ENCODE measurements at regions of chr12 and their contacts with region 1.

Region 1: DNA sequence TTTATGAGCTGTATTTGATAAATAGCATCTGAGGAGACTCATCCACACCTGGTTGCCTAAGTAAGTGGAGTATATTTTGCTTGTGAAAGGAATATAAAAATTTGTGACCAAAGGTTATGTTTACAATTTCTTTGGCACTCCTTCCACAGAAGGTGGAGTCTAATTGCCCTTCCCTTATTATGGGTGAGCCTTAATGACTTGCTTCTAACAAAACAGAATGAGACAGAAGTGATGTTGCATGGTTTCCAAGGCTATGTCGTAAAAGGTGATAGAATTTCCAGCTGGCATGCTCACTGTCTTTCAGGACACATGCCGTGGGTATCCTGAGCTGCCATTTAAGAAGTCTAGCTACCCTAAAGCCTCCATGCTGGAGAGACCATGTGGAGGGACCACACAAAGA is 116.8 kb upstream of the ABCD2 start:
- ATAC-seq: no peak
- H3K4me3 ChIP-seq: no peak overlapping the region
- H3K27ac ChIP-seq: no peak overlapping the region
- H3K4me1 ChIP-seq: no peaks in the 10 kb centered on the region

Region 2: GRCh38 chr12:39587225-39587624 is 149.2 kb before region 1 on chr12:
- in situ Hi-C with region 1: loop called in 1 of 9 experiments (anchors 25 kb)
- ATAC-seq: peak in 4 of 8 experiments; percentile 29 to 59 (median 42)
- H3K4me3 ChIP-seq: no peak overlapping the region
- H3K27ac ChIP-seq: no peak overlapping the region
- H3K4me1 ChIP-seq: no peaks in the 10 kb centered on the region

Region 3: GRCh38 chr12:39852346-39852745 is 115.9 kb after region 1 on chr12:
- in situ Hi-C with region 1: no loop called
- ATAC-seq: no peak
- H3K4me3 ChIP-seq: no peak overlapping the region
- H3K27ac ChIP-seq: no peak overlapping the region
- H3K4me1 ChIP-seq: peaks cover 0 to 2% of the 10 kb centered on the region in 2 donors